Activated T-helper 2 cell treated with anti-CD3 and anti-CD28 coated beads, Interferon-gamma antibody, Interleukin-2, Interleukin-4, amounts not matched to agents 10 μg/mL and 5 μg/mL and 100 μg/mL, durations not matched to agents 14 hours and 24 hours and 36 hours (primary cell): ENCODE measurements at regions of chr15 and their contacts with region 1.

Region 1: DNA sequence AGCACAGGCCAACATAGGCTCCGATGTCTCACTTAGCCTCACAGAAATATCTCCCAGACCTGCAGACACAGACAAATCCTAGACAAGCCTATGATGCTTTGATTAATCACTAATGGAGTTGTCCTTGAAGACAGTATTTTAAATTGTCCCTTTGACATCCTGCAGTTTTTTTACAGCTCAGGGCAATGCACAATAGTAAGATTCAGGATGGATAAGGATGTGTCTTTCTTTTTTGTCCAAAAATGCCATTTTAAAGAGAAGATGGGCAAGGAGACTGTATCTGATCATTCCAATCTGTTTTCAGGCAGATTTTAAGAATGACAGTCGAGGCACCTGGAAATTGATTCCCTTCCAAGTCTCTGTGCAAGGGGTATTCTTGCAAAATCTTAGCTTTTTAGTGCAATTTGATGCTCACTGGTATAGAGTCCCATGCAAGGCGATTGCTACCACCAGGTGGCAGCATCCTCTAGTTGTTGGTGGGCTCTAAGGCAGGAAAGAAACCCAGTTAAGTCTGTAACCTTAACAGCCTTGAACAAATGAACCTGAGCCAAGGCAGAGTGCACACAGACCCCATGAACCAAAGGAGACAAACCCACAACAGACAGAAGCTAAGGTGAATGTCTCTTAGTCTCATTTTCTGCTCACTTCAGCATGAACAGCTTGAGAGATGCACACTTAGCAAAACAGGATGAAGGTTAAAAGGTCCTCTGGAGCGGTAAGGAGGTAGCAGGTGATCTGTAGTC is 51.2 kb upstream of the MINAR1 start:
- DNase-seq: peak; percentile 46
- H3K4me3 Mint-ChIP-seq: no peak overlapping the region
- H3K27ac Mint-ChIP-seq: no peak overlapping the region
- H3K4me1 Mint-ChIP-seq: peaks cover 3% of the 10 kb centered on the region
- H3K27me3 Mint-ChIP-seq: no peaks in the 10 kb centered on the region

Region 2: GRCh38 chr15:79596051-79596507 is 215.2 kb after region 1 on chr15:
- intact Hi-C with region 1: loop called (anchors 1 kb)
- DNase-seq: peak; percentile 59
- H3K4me3 Mint-ChIP-seq: no peak overlapping the region
- H3K27ac Mint-ChIP-seq: no peak overlapping the region
- H3K4me1 Mint-ChIP-seq: peaks cover 5% of the 10 kb centered on the region
- H3K27me3 Mint-ChIP-seq: peaks cover 18% of the 10 kb centered on the region

Region 3: DNA sequence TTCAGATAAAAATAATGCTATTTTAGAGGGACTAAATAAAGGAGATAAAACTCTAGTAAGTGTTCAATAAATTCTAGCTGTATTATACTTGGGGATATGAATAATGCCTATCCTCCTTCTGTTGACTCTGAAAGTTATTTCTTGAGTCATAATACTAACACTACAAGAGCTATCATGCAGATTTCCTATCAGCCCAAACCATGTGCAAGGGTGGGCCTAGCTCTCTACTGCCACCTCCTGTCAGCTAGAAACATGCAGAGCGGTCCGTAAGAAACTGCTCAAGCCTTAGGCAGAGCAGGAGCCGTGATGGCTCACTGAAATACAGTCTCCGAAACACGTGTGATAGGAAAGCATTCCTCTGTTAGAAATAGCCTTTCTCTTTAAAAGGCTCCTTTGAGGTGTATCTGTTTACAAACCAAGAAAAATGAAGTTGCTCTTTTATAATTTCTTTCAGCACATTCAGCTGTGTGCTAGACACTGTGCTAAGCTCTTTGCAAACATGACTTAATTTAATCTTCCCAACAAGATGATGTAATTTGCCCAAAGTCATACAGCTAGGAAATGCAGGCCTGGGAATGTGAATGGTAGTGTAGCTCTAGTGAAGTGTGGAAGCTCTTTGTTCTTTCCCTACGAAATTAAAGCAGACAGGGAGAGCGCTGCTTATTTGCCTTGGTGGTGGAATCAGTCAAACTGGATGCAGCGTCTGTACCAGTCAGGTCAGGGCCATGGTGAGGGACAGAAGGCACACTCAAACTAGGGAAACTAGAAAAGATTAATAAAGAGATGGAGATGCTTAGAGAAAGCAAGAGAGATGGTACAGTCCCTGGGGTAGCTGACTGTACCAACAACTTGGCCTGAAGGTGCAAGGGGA is 472.8 kb after region 1 on chr15:
- intact Hi-C with region 1: loop called (anchors 2 kb)
- DNase-seq: peak; percentile 41
- H3K4me3 Mint-ChIP-seq: no peak overlapping the region
- H3K27ac Mint-ChIP-seq: no peak overlapping the region
- H3K4me1 Mint-ChIP-seq: peaks cover 13% of the 10 kb centered on the region
- H3K27me3 Mint-ChIP-seq: no peaks in the 10 kb centered on the region